IMR-90 (cell line): ENCODE measurements at regions of chr1 and their contacts with region 1.

Region 1: DNA sequence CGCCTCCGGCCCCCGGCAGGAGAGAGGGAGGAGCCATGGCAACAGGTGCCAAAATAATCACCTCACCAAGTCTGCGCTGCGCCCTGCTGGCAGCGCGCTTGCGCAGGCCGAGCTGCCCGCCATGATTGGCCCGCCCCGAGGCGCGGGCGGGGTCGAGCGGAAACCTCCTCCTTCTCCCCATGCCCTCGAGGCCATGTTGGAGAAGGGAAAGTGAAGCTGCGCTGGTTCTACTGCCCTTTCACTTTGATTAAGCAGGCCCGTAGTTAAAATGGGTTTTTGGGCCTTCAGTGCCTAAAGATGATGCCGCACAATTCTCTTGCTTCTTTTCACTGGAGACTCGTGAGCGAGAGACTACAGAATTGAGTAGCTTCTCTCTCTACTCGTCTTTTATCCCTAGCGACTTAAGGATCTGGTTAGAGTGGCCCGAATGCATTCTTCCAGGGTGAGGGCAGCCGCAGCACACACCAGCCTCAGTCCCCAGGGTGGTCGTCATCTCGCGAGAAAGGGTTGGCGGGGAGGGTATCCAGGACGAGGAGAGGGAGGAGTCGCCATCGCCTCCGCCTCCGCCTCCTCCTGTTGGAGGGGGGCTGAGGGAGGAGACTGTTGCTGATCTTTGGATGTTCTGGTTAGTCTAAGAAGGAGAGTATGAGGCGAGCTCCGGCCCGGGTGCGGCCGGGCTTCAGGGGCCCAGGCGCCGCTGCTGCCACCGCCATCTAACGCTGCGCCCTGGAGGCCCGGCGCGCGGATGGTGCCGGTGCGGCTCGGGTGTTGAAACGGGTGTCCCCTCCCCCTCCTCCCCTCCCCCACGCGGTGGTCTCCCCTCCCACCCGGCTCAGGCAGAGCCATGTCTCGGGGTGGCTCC is at the start of gene DCAF6:
- DNase-seq: peak; percentile 99
- ATAC-seq: peak; percentile 88
- H3K4me3 ChIP-seq: peak within 1 kb of the TSS; percentile 98
- H3K27ac ChIP-seq: peak within 1 kb of the TSS; percentile 89
- H3K4me1 ChIP-seq: no peaks in the 10 kb centered on the region
- H3K27me3 ChIP-seq: no peaks in the 10 kb centered on the region
- CTCF ChIP-seq: no peak
- POLR2A ChIP-seq: peak; percentile 88
- RAD21 ChIP-seq: no peak
- total RNA-seq, gene DCAF6: 74.7 and 88.7 TPM in 2 replicates

Region 2: DNA sequence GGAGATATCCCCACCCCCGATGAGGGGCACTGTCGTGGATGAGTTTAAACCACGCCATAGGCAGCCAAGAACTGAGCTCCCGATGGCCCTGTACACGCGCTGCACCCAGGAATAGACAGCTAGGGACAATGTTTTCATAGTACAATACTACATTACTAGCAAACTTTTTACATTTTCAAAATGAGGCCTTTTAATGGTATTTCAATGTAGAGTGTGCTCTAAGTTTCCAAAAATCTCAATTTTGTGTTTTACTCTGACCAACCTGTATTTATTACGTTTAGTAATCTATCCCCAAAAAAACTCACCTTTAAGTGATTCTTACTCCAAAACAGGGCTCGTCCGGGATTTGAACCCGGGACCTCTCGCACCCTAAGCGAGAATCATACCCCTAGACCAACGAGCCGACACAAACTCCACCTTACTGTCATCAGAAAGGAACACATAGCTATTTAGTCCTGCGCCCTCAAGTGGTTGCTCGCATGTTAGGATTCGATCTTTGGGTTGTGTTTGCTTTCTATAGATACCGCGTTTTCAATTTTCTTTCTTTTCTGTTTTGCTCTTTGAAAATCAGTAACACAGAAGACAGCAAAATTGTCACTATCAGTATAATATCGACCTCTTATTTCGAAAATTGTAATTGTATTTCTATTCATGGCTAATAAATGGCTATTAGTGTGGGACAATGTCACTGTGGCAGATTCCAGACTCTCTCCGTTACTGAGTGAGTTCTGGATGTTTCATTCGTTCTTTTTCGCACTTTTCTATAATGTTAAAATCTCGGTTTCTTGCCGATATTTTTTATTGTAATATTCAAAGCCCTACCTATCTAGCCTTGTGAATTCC is 220.9 kb before region 1 on chr1:
- CTCF ChIA-PET with region 1: interaction called, 3 read pairs
- POLR2A ChIA-PET with region 1: interaction called, 7 read pairs
- dilution Hi-C with region 1: no loop called
- in situ Hi-C with region 1: no loop called
- intact Hi-C with region 1: loop called (anchors 1 kb)
- DNase-seq: peak; percentile 83
- ATAC-seq: peak; percentile 51
- H3K4me3 ChIP-seq: peak overlapping the region; percentile 53
- H3K27ac ChIP-seq: peak overlapping the region; percentile 37
- H3K4me1 ChIP-seq: no peaks in the 10 kb centered on the region
- H3K27me3 ChIP-seq: peaks cover 2% of the 10 kb centered on the region; the same call in 1 of the 2 replicates
- CTCF ChIP-seq: peak; percentile 94
- POLR2A ChIP-seq: no peak
- RAD21 ChIP-seq: peak; percentile 46

Region 3: DNA sequence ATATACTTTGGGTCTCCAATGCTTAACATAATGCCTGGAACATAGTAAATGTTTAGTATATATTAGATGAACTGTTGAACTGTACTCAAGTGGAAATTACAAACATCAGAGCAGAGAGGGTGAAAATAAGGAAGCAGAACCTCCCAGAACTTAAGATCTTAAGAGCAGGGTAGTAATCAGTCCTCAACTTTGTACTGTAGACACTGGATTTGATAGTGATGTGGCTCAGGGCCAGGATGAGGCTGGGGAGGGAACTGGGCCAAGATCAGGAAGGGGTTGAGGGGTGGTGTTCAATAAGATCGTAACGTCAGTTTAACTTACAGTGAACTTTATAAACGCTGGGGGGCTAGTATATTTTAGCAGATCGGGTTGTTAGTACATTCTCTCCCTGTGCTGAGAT is 199.1 kb before region 1 on chr1:
- CTCF ChIA-PET with region 1: no interaction called
- POLR2A ChIA-PET with region 1: no interaction called
- dilution Hi-C with region 1: no loop called
- in situ Hi-C with region 1: no loop called
- intact Hi-C with region 1: no loop called
- DNase-seq: no peak
- ATAC-seq: no peak
- H3K4me3 ChIP-seq: no peak overlapping the region
- H3K27ac ChIP-seq: no peak overlapping the region
- H3K4me1 ChIP-seq: peaks cover 1% of the 10 kb centered on the region; the same call in 1 of the 2 replicates
- H3K27me3 ChIP-seq: no peaks in the 10 kb centered on the region
- CTCF ChIP-seq: no peak
- POLR2A ChIP-seq: no peak
- RAD21 ChIP-seq: no peak

Region 4: DNA sequence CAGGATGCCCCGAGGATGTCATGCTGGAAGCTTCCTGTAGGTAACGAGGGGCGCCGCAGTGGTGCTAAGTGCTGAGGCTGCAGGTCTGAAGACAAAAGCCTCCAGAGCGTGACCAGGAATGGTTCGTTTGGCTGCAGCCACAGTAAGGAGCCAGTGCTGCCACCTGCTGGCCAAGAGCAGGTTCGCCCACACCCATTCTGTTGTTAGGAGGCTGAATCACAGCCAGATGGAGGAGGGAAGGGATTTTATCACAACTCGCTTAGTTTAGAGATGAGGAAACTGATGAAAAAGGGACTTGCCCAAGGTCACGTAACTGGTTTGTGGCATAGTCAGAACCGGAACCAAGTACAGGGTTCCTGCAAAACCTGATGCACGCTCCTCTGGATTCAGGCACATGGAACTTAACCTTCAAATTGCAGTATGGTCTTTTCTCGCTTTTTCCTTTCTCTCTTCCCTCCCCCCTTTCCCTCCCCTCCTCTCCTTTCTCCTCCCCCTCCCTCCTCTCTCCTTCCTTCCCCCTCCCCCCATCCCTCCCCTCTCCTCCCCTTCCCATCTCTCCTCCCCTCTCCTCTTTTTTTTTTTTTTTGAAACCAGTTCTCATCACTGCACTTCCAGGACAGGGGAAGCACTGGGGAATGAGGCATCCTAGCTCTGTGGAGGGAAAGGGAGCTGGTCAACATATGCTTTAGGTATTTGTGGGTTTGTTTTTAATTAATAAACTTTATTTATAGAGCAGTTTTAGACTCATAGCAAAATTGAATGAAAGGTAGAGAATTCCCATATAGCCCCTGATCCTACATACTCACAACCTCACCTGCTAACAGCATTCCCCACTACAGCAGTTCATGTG is 132.7 kb before region 1 on chr1:
- CTCF ChIA-PET with region 1: no interaction called
- POLR2A ChIA-PET with region 1: no interaction called
- dilution Hi-C with region 1: no loop called
- in situ Hi-C with region 1: no loop called
- intact Hi-C with region 1: loop called (anchors 5 kb)
- DNase-seq: peak; percentile 95
- ATAC-seq: peak; percentile 89
- H3K4me3 ChIP-seq: no peak overlapping the region
- H3K27ac ChIP-seq: no peak overlapping the region
- H3K4me1 ChIP-seq: peaks cover 9% of the 10 kb centered on the region
- H3K27me3 ChIP-seq: no peaks in the 10 kb centered on the region
- CTCF ChIP-seq: peak; percentile 98
- POLR2A ChIP-seq: no peak
- RAD21 ChIP-seq: peak; percentile 89

Region 5: GRCh38 chr1:167819849-167820683 is 116.2 kb before region 1 on chr1:
- CTCF ChIA-PET with region 1: no interaction called
- POLR2A ChIA-PET with region 1: interaction called, 3 read pairs
- dilution Hi-C with region 1: no loop called
- in situ Hi-C with region 1: no loop called
- intact Hi-C with region 1: loop called (anchors 5 kb)
- DNase-seq: peak; percentile 96
- ATAC-seq: peak; percentile 97
- H3K4me3 ChIP-seq: peak overlapping the region; percentile 15; the same call in 1 of the 2 replicates
- H3K27ac ChIP-seq: peak overlapping the region; percentile 61
- H3K4me1 ChIP-seq: peaks cover 12% of the 10 kb centered on the region
- H3K27me3 ChIP-seq: no peaks in the 10 kb centered on the region
- CTCF ChIP-seq: no peak
- POLR2A ChIP-seq: peak; percentile 53
- RAD21 ChIP-seq: peak; percentile 28; the same call in 1 of the 2 replicates

Region 6: GRCh38 chr1:167904652-167905130 is 31.6 kb before region 1 on chr1:
- CTCF ChIA-PET with region 1: no interaction called
- POLR2A ChIA-PET with region 1: no interaction called
- dilution Hi-C with region 1: no loop called
- in situ Hi-C with region 1: no loop called
- intact Hi-C with region 1: loop called (anchors 2 kb)
- DNase-seq: peak; percentile 93
- ATAC-seq: peak; percentile 94
- H3K4me3 ChIP-seq: no peak overlapping the region
- H3K27ac ChIP-seq: peak overlapping the region; percentile 36; the same call in 1 of the 2 replicates
- H3K4me1 ChIP-seq: peaks cover 11% of the 10 kb centered on the region
- H3K27me3 ChIP-seq: no peaks in the 10 kb centered on the region
- CTCF ChIP-seq: 0 out of 2 replicates have a peak, but pooled peaks have one; percentile 21
- POLR2A ChIP-seq: no peak
- RAD21 ChIP-seq: peak; percentile 41

Region 7: DNA sequence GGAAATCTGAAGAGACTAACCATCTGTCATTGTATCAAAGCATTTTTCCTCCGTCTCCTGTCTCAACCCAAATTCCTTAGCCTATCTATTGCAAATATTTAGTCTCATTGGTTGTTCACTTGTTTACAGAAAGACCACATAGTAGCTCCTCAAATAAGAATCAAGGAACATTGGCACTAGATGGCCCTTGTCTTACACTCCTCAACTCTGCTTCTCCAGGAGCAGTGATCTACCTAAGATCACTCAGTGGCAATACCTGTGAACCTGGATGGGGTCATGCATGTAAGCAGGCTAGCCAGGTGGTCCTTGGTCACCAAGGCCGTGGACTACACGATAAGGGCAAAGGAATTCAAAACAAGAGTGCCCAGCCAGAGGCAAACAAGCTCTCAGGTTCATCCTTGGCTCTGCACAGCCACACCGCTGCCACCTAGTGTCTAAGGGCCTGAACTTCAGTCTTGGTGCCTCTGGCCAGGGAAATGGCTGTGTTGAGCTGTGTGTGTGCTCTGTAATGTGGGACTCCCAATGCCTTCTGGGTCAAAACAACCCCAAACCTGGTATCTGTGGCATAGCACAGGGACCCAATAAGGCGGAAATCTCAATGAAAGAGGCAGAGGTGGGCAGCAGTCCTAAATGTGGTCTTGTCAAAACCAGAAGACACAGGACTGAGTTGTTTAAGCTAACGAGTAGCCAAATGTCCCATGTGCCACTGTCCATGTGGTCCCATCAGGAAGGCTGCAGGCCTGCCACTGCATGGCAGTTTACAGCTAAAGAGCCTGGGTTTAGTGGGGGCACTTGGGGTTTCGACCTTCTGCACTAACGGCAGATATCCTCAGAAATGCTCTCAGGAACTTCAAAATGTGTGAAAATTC is 145.9 kb after region 1 on chr1:
- CTCF ChIA-PET with region 1: interaction called, 7 read pairs
- POLR2A ChIA-PET with region 1: no interaction called
- dilution Hi-C with region 1: no loop called
- in situ Hi-C with region 1: no loop called
- intact Hi-C with region 1: loop called (anchors 5 kb)
- DNase-seq: peak; percentile 79
- ATAC-seq: peak; percentile 89
- H3K4me3 ChIP-seq: no peak overlapping the region
- H3K27ac ChIP-seq: no peak overlapping the region
- H3K4me1 ChIP-seq: peaks cover 9% of the 10 kb centered on the region; the same call in 1 of the 2 replicates
- H3K27me3 ChIP-seq: no peaks in the 10 kb centered on the region
- CTCF ChIP-seq: peak; percentile 83
- POLR2A ChIP-seq: no peak
- RAD21 ChIP-seq: peak; percentile 78

Region 8: DNA sequence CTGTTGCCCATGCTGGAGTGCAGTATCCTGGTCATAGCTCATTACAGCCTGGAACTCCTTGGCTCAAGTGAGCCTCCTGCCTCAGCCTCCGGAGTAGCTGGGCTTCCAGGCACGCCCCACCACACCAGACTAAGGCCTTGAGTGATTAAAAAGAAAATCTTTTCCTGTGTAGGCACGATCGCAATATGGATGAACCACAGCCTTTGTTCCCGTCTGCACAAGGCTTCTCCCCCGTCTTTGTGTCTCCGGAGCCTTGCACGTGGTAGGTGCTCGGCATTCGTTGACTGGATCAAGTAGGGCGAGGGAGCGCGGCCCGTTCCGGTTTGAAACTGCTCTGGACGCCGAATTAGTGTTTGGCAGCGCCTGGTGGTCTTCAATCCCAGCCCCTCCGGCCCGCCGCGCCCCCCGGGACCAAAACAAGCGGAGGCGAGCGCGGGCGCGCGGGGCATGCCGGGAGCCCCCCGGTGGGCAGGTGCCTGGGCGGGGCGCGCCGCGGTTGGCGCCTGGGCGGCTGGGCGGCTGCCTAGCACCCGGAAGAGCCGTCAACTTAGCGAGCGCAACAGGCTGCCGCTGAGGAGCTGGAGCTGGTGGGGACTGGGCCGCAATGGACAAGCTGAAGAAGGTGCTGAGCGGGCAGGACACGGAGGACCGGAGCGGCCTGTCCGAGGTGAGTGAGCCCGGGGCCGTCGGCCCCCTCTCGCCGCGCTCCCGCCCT is 289.3 kb after region 1 on chr1 and contains the start of gene SFT2D2:
- CTCF ChIA-PET with region 1: no interaction called
- POLR2A ChIA-PET with region 1: no interaction called
- dilution Hi-C with region 1: no loop called
- in situ Hi-C with region 1: no loop called
- intact Hi-C with region 1: loop called (anchors 5 kb)
- DNase-seq: peak; percentile 67
- ATAC-seq: peak; percentile 95
- H3K4me3 ChIP-seq: peak within 1 kb of the TSS; percentile 85
- H3K27ac ChIP-seq: peak within 1 kb of the TSS; percentile 86
- H3K4me1 ChIP-seq: peaks cover 3% of the 10 kb centered on the region
- H3K27me3 ChIP-seq: no peaks in the 10 kb centered on the region; the same call in 1 of the 2 replicates
- CTCF ChIP-seq: no peak
- POLR2A ChIP-seq: peak; percentile 9; the same call in 1 of the 2 replicates
- RAD21 ChIP-seq: no peak
- total RNA-seq, gene SFT2D2: 37.6 and 42.2 TPM in 2 replicates